ENCODE measurements at regions of chr3 and their contacts with region 1.

Region 1: GRCh38 chr3:170414202-170414663 is 4.4 kb upstream of the CLDN11 start:
- H3K4me3 ChIP-seq: no peak overlapping the region
- H3K27ac ChIP-seq: no peak overlapping the region
- H3K4me1 ChIP-seq: no peaks in the 10 kb centered on the region
- CTCF ChIP-seq: peak; percentile 38; the same call in 1 of the 2 replicates

Region 2: DNA sequence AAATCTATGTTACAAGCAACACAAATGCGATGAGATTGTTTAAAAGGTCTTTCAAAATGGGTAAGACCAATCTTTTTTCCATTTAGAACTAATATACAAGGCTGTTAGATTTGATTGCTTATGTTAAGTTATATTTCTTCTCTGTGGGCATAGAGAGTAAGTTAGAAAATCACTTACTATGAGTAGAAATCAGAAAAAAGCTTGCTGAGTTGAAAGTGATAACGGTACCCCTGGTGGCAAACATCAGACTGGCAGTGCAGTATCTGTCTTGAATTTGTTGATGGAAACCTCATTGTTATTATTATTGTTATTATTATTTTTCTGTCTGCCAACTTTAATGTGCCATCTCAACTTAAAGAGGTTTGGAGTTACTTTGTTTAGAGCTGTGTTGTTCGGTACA is 16.8 kb after region 1 on chr3:
- CTCF ChIA-PET with region 1: interaction called, 20 read pairs
- POLR2A ChIA-PET with region 1: no interaction called
- H3K4me3 ChIP-seq: no peak overlapping the region
- H3K27ac ChIP-seq: no peak overlapping the region
- H3K4me1 ChIP-seq: no peaks in the 10 kb centered on the region
- CTCF ChIP-seq: no peak

Region 3: GRCh38 chr3:170811928-170812591 is 397.8 kb after region 1 on chr3:
- CTCF ChIA-PET with region 1: interaction called, 202 read pairs
- POLR2A ChIA-PET with region 1: no interaction called
- H3K4me3 ChIP-seq: no peak overlapping the region
- H3K27ac ChIP-seq: no peak overlapping the region
- H3K4me1 ChIP-seq: no peaks in the 10 kb centered on the region
- CTCF ChIP-seq: peak; percentile 70

Region 4: DNA sequence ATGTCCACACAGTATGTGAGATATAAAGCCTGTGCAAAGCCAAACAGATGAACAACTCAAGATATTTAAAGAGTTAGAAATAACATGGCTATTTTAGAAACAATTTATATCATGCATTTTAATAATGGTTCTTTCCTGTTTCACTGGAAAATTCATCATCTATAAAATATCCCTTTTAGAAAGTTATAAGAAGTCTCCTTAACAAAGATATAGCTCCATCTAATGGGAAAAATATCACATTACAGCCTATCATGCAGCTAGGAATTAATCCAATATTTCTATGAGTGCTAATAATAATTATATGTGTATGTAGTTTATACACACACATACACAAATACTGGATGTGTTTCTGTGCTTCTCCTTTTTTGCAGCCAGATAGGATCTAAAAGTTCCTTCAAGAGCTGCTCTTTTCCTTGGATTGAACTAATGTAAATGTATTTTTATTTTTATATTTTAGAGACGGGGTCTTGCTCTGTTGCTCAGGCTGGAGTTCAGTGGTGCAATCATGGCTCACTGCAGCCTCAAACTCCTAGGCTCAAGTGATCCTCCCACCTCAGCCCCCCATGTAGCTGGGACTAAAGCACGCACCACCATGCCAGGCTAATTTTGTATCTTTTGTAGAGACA is 434.2 kb after region 1 on chr3:
- CTCF ChIA-PET with region 1: interaction called, 18 read pairs
- POLR2A ChIA-PET with region 1: no interaction called
- H3K4me3 ChIP-seq: no peak overlapping the region
- H3K27ac ChIP-seq: no peak overlapping the region
- H3K4me1 ChIP-seq: no peaks in the 10 kb centered on the region
- CTCF ChIP-seq: no peak

Measured in HEK293 (cell line).